MCF 10A (cell line): ENCODE measurements at regions of chr16 and their contacts with region 1.

Region 1: GRCh38 chr16:11658894-11659708 is 9.2 kb upstream of the SNN start:
- DNase-seq: peak; percentile 97
- H3K4me3 Mint-ChIP-seq: peak overlapping the region; percentile 37
- H3K27ac Mint-ChIP-seq: peak overlapping the region; percentile 94
- H3K4me1 Mint-ChIP-seq: peaks cover 18% of the 10 kb centered on the region
- H3K27me3 Mint-ChIP-seq: no peaks in the 10 kb centered on the region
- CTCF ChIP-seq: no peak

Region 2: GRCh38 chr16:11613381-11614303 is 45.5 kb before region 1 on chr16:
- CTCF ChIA-PET with region 1: no interaction called
- POLR2A ChIA-PET with region 1: interaction called, 11 read pairs
- intact Hi-C with region 1: no loop called
- DNase-seq: peak; percentile 96
- H3K4me3 Mint-ChIP-seq: peak overlapping the region; percentile 39
- H3K27ac Mint-ChIP-seq: peak overlapping the region; percentile 90
- H3K4me1 Mint-ChIP-seq: peaks cover 28% of the 10 kb centered on the region
- H3K27me3 Mint-ChIP-seq: no peaks in the 10 kb centered on the region
- CTCF ChIP-seq: no peak

Region 3: GRCh38 chr16:11675561-11676511 is 16.7 kb after region 1 on chr16:
- CTCF ChIA-PET with region 1: interaction called, 3 read pairs
- POLR2A ChIA-PET with region 1: interaction called, 21 read pairs
- intact Hi-C with region 1: no loop called
- DNase-seq: peak; percentile 80
- H3K4me3 Mint-ChIP-seq: no peak overlapping the region
- H3K27ac Mint-ChIP-seq: no peak overlapping the region
- H3K4me1 Mint-ChIP-seq: peaks cover 28% of the 10 kb centered on the region
- H3K27me3 Mint-ChIP-seq: no peaks in the 10 kb centered on the region
- CTCF ChIP-seq: no peak